Activated CD4-positive, alpha-beta T cell treated with anti-CD3 and anti-CD28 coated beads, Interleukin-2, amount 10 ng/mL, durations not matched to agents 24 days and 14 days (primary cell): ENCODE measurements at regions of chr11 and their contacts with region 1.

Region 1: DNA sequence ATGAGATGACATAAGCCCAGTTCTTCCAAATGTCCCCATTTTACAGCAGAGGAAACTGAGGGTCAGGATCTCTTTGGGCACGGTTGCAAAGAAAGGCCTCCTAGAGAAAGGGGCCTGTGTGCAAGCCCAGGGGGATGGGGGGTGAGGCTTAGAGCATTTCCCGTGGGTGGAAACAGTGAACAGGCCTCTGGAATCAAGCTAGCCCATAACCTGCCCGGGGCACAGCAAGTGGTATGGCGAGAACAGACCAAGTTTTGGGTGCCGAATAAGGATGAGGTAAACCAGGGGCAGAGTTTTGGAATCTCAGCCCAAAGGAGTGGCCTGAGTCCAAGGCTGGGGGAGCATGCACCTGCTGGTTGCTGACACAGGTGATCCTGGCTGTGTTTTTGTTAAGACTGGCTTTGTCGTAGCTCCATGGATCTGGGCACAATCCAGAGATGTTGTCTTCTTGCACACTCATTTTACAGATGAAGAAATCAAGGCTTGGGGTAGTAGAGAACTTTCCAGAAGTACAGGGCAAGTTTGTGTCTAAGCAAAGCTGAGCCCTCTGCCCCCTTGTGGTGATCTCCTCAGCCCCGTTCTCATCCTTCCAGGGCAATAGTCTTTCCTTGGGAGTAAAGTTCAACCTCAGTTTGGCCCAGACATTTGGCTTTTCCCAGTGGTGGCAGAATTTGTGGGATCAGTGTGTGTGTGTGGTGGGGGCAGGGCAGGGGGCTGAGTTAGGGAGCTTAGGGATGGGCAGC is 53.5 kb upstream of the MYEOV start:
- DNase-seq: no peak
- H3K4me3 Mint-ChIP-seq: no peak overlapping the region
- H3K27ac Mint-ChIP-seq: peak overlapping the region; percentile 21
- H3K4me1 Mint-ChIP-seq: peaks cover 28% of the 10 kb centered on the region
- H3K27me3 Mint-ChIP-seq: peaks cover 10% of the 10 kb centered on the region

Region 2: DNA sequence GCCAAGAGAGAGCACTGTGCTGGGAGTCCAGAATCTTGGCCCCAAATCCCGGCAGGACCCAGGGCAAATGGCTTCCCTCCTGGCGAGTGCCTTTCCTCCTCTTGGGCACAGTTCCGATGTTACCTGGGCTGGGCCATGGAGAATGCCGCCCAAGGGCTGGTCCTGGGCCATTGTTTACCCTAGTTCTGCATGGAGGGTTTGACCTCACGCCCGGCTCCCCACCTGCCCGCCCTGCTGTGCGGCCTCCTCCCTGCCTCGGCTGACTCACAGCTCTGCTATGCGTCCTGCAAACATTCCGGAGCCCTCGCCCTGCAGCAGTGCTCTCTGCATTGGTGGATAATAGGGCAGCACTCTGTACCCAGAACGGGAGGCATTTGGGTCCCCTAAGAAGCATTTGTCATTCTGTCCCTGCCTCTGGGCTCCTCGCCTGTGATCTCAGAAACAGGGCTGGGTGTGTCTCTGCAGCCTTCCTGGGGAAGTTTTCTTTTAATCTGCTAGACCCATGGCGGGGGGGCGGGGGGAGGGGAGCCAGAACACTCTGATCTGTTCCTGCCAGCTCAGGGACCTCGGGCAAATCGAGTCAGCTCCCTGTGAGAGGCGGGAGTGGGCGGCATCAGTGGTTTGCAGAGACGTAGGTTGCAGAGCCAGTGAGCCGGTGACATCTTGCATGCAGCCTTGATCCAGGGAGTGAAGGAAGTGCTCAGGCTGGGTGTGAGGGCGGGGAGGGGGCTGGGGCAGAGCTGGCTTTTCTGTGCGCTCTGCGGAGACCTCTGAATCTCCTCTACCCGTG is 117.7 kb before region 1 on chr11:
- intact Hi-C with region 1: loop called (anchors 1 kb)
- DNase-seq: peak; percentile 84
- H3K4me3 Mint-ChIP-seq: peak overlapping the region; percentile 74
- H3K27ac Mint-ChIP-seq: peak overlapping the region; percentile 86
- H3K4me1 Mint-ChIP-seq: peaks cover 27% of the 10 kb centered on the region
- H3K27me3 Mint-ChIP-seq: no peaks in the 10 kb centered on the region

Region 3: DNA sequence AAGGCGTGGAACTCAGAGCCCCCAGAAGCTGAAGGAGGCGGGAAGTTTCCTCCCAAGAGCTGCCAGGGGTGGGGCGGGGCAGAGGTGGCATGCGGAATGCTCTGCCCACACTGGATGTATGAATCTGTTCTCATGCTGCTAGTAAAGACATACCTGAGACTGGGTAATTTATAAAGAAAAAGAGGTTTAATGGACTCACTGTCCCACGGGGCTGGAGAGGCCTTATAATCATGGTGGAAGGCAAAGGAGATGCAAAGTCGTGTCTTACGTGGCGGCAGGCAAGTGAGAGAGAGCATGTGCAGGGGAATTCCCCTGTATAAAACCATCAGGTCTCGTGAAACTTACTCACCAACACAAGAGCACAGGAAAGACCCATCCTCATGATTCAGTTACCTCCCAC is 27.2 kb before region 1 on chr11:
- intact Hi-C with region 1: loop called (anchors 1 kb)
- DNase-seq: peak; percentile 61
- H3K4me3 Mint-ChIP-seq: no peak overlapping the region
- H3K27ac Mint-ChIP-seq: peak overlapping the region; percentile 35
- H3K4me1 Mint-ChIP-seq: peaks cover 20% of the 10 kb centered on the region
- H3K27me3 Mint-ChIP-seq: peaks cover 11% of the 10 kb centered on the region

Region 4: GRCh38 chr11:69352715-69353325 is 112.3 kb after region 1 on chr11:
- intact Hi-C with region 1: loop called (anchors 5 kb)
- DNase-seq: peak; percentile 59
- H3K4me3 Mint-ChIP-seq: no peak overlapping the region
- H3K27ac Mint-ChIP-seq: peak overlapping the region; percentile 11
- H3K4me1 Mint-ChIP-seq: peaks cover 14% of the 10 kb centered on the region
- H3K27me3 Mint-ChIP-seq: peaks cover 5% of the 10 kb centered on the region

Region 5: DNA sequence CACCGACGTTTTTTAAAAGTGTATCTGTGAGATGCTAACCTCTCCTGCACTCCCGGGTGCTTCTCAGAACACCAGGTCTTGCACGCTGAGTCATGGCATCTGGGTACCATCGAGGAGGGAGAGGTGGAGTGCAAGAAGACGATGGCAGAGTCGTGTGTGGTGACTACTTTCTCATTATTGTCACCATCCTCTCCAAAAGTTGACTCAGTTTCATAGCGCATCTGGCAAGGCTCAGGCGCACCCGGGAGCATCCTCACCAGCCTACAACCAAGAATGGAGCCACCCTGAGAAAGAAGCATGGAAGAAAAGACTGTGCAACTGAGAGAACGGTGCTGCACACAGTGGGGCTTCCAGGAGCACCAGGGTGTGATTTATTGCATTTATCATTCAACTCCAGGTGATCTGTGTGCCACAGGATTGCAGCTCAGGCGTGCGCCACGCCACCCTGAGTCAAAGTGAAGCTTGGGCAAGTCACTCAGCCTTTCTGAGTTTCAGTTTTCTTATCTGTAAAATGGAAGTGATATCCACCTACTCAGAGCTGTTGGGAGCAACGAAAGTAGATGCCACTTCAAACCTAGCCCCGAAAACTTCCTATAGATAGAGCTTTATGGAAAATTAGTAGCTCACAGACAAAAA is 306.4 kb after region 1 on chr11:
- intact Hi-C with region 1: loop called (anchors 2 kb)
- DNase-seq: peak; percentile 66
- H3K4me3 Mint-ChIP-seq: peak overlapping the region; percentile 29
- H3K27ac Mint-ChIP-seq: peak overlapping the region; percentile 41
- H3K4me1 Mint-ChIP-seq: peaks cover 10% of the 10 kb centered on the region
- H3K27me3 Mint-ChIP-seq: peaks cover 23% of the 10 kb centered on the region